ENCODE measurements at regions of chr6 and their contacts with region 1.

Region 1: GRCh38 chr6:36027501-36028087 is at the start of gene MAPK14:
- DNase-seq: peak; percentile 95 to 100 (median 98)
- ATAC-seq: peak; percentile 86
- H3K4me3 ChIP-seq: peak within 1 kb of the TSS; percentile 99
- H3K4me3 Mint-ChIP-seq: peak within 1 kb of the TSS; percentile 96
- H3K27ac ChIP-seq: peak within 1 kb of the TSS; percentile 53 to 85
- H3K27ac Mint-ChIP-seq: peak within 1 kb of the TSS; percentile 83
- H3K4me1 ChIP-seq: peaks cover 34% of the 10 kb centered on the region
- H3K4me1 Mint-ChIP-seq: peaks cover 44% of the 10 kb centered on the region
- H3K27me3 ChIP-seq: peaks cover 10 to 21% of the 10 kb centered on the region in 2 experiments
- H3K27me3 Mint-ChIP-seq: peaks cover 20% of the 10 kb centered on the region
- CTCF ChIP-seq: peak; percentile 80
- total RNA-seq, gene MAPK14: 42.6 to 42.8 TPM

Region 2: DNA sequence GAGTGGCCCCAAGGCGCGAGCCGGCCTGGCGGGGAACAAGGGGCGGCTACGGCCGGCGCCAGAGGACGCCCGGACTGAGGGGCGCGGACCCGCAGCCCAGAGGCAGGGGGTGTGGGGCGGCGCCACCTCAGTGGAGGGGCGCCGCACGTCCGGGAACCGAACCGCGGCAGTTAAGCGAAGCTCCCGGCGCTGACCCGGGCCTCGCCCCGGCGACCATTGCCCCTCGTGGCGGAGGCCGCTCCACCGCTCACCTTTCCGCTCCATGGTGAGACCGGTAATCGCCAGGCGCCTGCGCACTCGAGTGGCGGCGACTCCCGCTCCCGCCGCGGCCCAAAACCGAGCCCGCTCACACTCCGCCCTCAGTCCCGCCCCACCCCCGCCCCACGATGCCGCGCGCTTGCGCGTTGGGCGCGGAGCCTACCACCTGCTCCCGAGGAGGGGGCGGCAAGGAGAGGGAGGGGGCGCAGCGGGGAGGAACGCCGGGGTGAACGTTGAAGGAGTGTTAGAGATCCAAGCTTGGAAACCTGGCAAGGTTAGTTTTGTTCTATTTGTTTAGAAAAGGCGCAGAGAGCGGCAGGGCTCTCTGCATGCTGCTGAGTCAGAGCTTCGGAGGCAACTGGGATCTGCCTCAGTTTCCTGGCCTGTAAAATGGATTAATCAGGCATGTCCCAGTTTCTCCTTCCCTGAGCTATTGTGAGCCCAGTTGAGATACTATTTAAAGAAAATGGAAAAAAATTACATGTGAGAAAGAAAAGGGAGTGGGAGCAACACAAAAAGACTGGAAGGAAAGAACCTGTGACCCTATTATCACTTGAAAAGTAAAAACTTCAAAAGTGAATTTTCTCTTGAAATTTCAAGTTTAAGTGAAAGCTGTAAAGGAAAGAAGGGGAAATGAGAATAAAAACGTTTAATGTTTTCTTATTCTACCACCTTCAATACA is 106.5 kb before region 1 on chr6 and contains the start of gene SRPK1:
- CTCF ChIA-PET with region 1: no interaction called
- POLR2A ChIA-PET with region 1: interaction called, 16 read pairs
- intact Hi-C with region 1: loop called in 1 of 2 experiments (anchors 2 kb)
- DNase-seq: peak; percentile 71 to 92 (median 81)
- ATAC-seq: peak; percentile 75
- H3K4me3 ChIP-seq: peak within 1 kb of the TSS; percentile 82
- H3K4me3 Mint-ChIP-seq: peak within 1 kb of the TSS; percentile 96
- H3K27ac ChIP-seq: peak within 1 kb of the TSS; percentile 2 to 59
- H3K27ac Mint-ChIP-seq: peak within 1 kb of the TSS; percentile 80
- H3K4me1 ChIP-seq: peaks cover 11% of the 10 kb centered on the region
- H3K4me1 Mint-ChIP-seq: peaks cover 44% of the 10 kb centered on the region
- H3K27me3 ChIP-seq: no peaks in the 10 kb centered on the region
- H3K27me3 Mint-ChIP-seq: no peaks in the 10 kb centered on the region
- CTCF ChIP-seq: no peak
- total RNA-seq, gene SRPK1: 23.0 to 29.1 TPM

Region 3: GRCh38 chr6:35970181-35970580 is 57.4 kb before region 1 on chr6:
- CTCF ChIA-PET with region 1: no interaction called
- POLR2A ChIA-PET with region 1: no interaction called
- intact Hi-C with region 1: no loop called
- DNase-seq: no peak
- ATAC-seq: no peak
- H3K4me3 ChIP-seq: no peak overlapping the region
- H3K4me3 Mint-ChIP-seq: no peak overlapping the region
- H3K27ac ChIP-seq: no peak overlapping the region
- H3K27ac Mint-ChIP-seq: no peak overlapping the region
- H3K4me1 ChIP-seq: no peaks in the 10 kb centered on the region
- H3K4me1 Mint-ChIP-seq: no peaks in the 10 kb centered on the region
- H3K27me3 ChIP-seq: no peaks in the 10 kb centered on the region
- H3K27me3 Mint-ChIP-seq: no peaks in the 10 kb centered on the region
- CTCF ChIP-seq: no peak

Region 4: DNA sequence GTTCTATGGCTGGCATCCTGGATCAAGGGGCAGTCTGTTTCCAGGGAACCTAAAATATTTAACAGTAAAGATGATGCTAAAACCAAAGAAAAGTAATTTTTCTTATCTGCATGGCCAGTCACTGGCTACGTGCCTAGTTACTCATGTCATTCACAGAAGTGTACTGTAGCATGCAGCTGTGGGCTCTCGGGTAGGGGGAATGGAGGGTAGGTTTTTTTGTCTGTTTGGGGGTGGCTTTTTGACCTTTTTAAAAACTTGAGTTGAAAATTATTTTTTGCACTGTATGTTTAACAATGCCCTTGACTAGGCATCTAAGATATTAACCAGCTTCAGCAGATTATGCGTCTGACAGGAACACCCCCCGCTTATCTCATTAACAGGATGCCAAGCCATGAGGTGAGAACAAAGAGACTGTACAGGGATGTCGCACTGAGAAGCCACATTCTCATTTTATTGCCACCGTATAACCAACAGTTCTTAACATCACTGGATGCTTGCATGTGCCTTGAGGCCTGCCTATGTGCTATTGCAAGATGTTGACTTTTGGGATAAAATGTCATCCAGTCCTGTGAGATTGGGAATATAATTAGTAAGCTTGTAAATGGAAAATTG is 72.4 kb after region 1 on chr6:
- CTCF ChIA-PET with region 1: interaction called, 77 read pairs
- POLR2A ChIA-PET with region 1: interaction called, 57 read pairs
- intact Hi-C with region 1: loop called (anchors 1 kb)
- DNase-seq: peak in 7 of 14 experiments; percentile 35 to 84 (median 57)
- ATAC-seq: peak; percentile 90
- H3K4me3 ChIP-seq: no peak overlapping the region
- H3K4me3 Mint-ChIP-seq: peak overlapping the region; percentile 17
- H3K27ac ChIP-seq: peak overlapping the region; percentile 1 to 18
- H3K27ac Mint-ChIP-seq: peak overlapping the region; percentile 89
- H3K4me1 ChIP-seq: peaks cover 29% of the 10 kb centered on the region
- H3K4me1 Mint-ChIP-seq: peaks cover 64% of the 10 kb centered on the region
- H3K27me3 ChIP-seq: no peaks in the 10 kb centered on the region
- H3K27me3 Mint-ChIP-seq: no peaks in the 10 kb centered on the region
- CTCF ChIP-seq: no peak

Region 5: GRCh38 chr6:36131511-36132245 is 104.1 kb after region 1 on chr6:
- CTCF ChIA-PET with region 1: interaction called, 18 read pairs
- POLR2A ChIA-PET with region 1: interaction called, 32 read pairs
- intact Hi-C with region 1: no loop called
- DNase-seq: peak in 11 of 14 experiments; percentile 25 to 76 (median 40)
- ATAC-seq: peak; percentile 73
- H3K4me3 ChIP-seq: peak overlapping the region; percentile 83
- H3K4me3 Mint-ChIP-seq: peak overlapping the region; percentile 93
- H3K27ac ChIP-seq: peak overlapping the region; percentile 82 to 88
- H3K27ac Mint-ChIP-seq: peak overlapping the region; percentile 95
- H3K4me1 ChIP-seq: peaks cover 51% of the 10 kb centered on the region
- H3K4me1 Mint-ChIP-seq: peaks cover 44% of the 10 kb centered on the region
- H3K27me3 ChIP-seq: no peaks in the 10 kb centered on the region
- H3K27me3 Mint-ChIP-seq: no peaks in the 10 kb centered on the region
- CTCF ChIP-seq: peak; percentile 9

Region 6: GRCh38 chr6:36302227-36302976 is 274.8 kb after region 1 on chr6:
- CTCF ChIA-PET with region 1: interaction called, 5 read pairs
- POLR2A ChIA-PET with region 1: no interaction called
- intact Hi-C with region 1: loop called (anchors 1 to 2 kb)
- DNase-seq: peak; percentile 78 to 97 (median 92)
- ATAC-seq: peak; percentile 99
- H3K4me3 ChIP-seq: no peak overlapping the region
- H3K4me3 Mint-ChIP-seq: no peak overlapping the region
- H3K27ac ChIP-seq: no peak overlapping the region
- H3K27ac Mint-ChIP-seq: no peak overlapping the region
- H3K4me1 ChIP-seq: peaks cover 8% of the 10 kb centered on the region
- H3K4me1 Mint-ChIP-seq: peaks cover 7% of the 10 kb centered on the region
- H3K27me3 ChIP-seq: no peaks in the 10 kb centered on the region
- H3K27me3 Mint-ChIP-seq: peaks cover 16% of the 10 kb centered on the region
- CTCF ChIP-seq: peak; percentile 99

Region 7: GRCh38 chr6:36442671-36443470 is 415.3 kb after region 1 on chr6 and contains the starts of genes KCTD20 and PXT1:
- CTCF ChIA-PET with region 1: no interaction called
- POLR2A ChIA-PET with region 1: no interaction called
- intact Hi-C with region 1: loop called in 1 of 2 experiments (anchors 5 kb)
- DNase-seq: peak; percentile 69 to 93 (median 80)
- ATAC-seq: peak; percentile 75
- H3K4me3 ChIP-seq: peak within 1 kb of the TSS; percentile 97
- H3K4me3 Mint-ChIP-seq: peak within 1 kb of the TSS; percentile 99
- H3K27ac ChIP-seq: peak within 1 kb of the TSS; percentile 85 to 92
- H3K27ac Mint-ChIP-seq: peak within 1 kb of the TSS; percentile 97
- H3K4me1 ChIP-seq: peaks cover 27% of the 10 kb centered on the region
- H3K4me1 Mint-ChIP-seq: peaks cover 61% of the 10 kb centered on the region
- H3K27me3 ChIP-seq: no peaks in the 10 kb centered on the region
- H3K27me3 Mint-ChIP-seq: no peaks in the 10 kb centered on the region
- CTCF ChIP-seq: no peak
- total RNA-seq, gene KCTD20: 38.4 to 39.5 TPM
- total RNA-seq, gene PXT1: 0.55 to 0.59 TPM

Region 8: DNA sequence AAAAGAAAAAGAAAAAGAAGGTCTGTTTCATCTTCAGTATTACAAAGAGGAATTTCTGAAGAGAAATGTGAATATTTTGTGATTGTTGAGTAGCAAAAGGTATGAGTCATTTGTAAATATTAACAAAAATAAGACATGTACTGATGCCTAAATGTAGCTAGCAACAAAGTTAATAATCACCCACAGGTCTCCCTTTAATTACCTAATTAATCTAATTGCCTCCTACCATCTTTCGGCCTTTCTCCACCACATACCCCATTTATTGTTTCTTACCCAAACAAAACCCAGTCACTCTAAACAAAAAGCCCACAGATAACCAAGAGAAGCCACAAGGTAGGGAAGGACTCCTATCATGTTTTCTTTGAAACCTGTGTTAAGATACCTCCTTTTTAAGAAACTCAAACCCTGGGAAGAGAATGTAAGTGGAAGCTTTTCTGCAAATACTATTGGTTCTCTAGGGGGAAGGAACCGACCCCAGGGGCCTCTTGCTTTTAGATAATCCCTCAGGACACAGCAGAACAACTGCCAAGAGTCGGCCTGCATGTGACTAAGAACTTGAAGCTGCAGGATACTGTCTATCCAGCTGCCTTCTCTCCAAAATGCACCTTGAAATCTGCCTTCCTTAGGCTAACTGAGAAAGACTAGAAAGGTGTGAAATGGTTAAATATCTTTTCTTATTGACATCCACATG is 535.8 kb after region 1 on chr6:
- CTCF ChIA-PET with region 1: no interaction called
- POLR2A ChIA-PET with region 1: no interaction called
- intact Hi-C with region 1: no loop called
- DNase-seq: no peak
- ATAC-seq: no peak
- H3K4me3 ChIP-seq: no peak overlapping the region
- H3K4me3 Mint-ChIP-seq: no peak overlapping the region
- H3K27ac ChIP-seq: no peak overlapping the region
- H3K27ac Mint-ChIP-seq: no peak overlapping the region
- H3K4me1 ChIP-seq: no peaks in the 10 kb centered on the region
- H3K4me1 Mint-ChIP-seq: no peaks in the 10 kb centered on the region
- H3K27me3 ChIP-seq: no peaks in the 10 kb centered on the region
- H3K27me3 Mint-ChIP-seq: no peaks in the 10 kb centered on the region
- CTCF ChIP-seq: no peak

Region 9: DNA sequence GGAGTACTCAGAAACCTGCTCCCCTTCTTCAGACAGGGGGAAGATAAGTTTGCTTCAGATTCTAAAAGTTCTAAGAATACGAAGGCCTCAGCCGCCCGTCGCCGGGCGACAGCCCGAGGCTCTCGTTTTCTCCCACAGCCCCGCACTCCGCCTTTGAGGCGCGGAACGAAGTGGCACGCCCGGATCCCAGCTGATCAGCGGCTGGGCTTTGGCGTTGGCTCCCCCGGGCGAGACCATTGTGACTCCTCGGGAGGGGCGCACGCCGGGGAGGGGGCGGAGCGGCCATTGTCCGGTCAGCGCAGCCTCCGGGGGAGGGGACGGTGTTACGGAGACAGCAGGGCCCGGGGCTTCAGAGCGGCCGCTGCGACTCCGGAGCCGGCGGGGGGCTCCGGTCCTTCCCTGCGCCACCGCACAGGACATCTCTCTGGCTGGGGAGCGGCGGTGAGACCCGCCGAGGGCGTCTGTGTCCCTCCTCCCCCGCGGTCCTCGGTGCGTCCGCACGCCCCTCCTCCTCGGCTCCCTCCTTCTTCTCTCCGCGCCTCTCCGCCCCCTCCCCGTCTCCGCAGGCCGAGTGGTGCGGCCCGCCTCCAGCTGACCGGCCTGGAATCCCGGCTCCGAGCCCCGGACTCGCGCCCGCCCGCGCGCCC is 1791.7 kb after region 1 on chr6 and contains the start of gene ZFAND3:
- CTCF ChIA-PET with region 1: no interaction called
- POLR2A ChIA-PET with region 1: no interaction called
- intact Hi-C with region 1: loop called in 1 of 2 experiments (anchors 10 kb)
- DNase-seq: peak; percentile 85 to 96 (median 90)
- ATAC-seq: peak; percentile 81
- H3K4me3 ChIP-seq: peak within 1 kb of the TSS; percentile 83
- H3K4me3 Mint-ChIP-seq: peak within 1 kb of the TSS; percentile 97
- H3K27ac ChIP-seq: peak within 1 kb of the TSS; percentile 89 to 94
- H3K27ac Mint-ChIP-seq: peak within 1 kb of the TSS; percentile 98
- H3K4me1 ChIP-seq: peaks cover 40% of the 10 kb centered on the region
- H3K4me1 Mint-ChIP-seq: peaks cover 64% of the 10 kb centered on the region
- H3K27me3 ChIP-seq: no peaks in the 10 kb centered on the region
- H3K27me3 Mint-ChIP-seq: no peaks in the 10 kb centered on the region
- CTCF ChIP-seq: no peak
- total RNA-seq, gene ZFAND3: 34.4 to 37.0 TPM

Measured in CD4-positive, alpha-beta T cell (primary cell).